H1 (cell line): ENCODE measurements at regions of chr11 and their contacts with region 1.

Region 1: GRCh38 chr11:3091791-3092602 is 34.8 kb upstream of the CARS1 start:
- DNase-seq: peak; percentile 94 to 98
- H3K4me3 ChIP-seq: no peak overlapping the region
- H3K27ac ChIP-seq: no peak overlapping the region
- H3K4me1 ChIP-seq: peaks cover 0 to 20% (median 6%) of the 10 kb centered on the region in 4 experiments; a peak in 5 of 7 replicates
- H3K27me3 ChIP-seq: no peaks in the 10 kb centered on the region
- CTCF ChIP-seq: peak in 2 of 3 experiments; percentile 99; a peak in 3 of 4 replicates
- EP300 ChIP-seq: peak in 1 of 2 experiments; percentile 74; a peak in 1 of 3 replicates
- POLR2A ChIP-seq: no peak
- RAD21 ChIP-seq: peak; percentile 96 to 97

Region 2: GRCh38 chr11:2955906-2956476 is 136.0 kb before region 1 on chr11:
- CTCF ChIA-PET with region 1: interaction called, 11 read pairs
- POLR2A ChIA-PET with region 1: no interaction called
- DNase-seq: no peak
- H3K4me3 ChIP-seq: no peak overlapping the region
- H3K27ac ChIP-seq: no peak overlapping the region; the same call in 1 of the 2 replicates
- H3K4me1 ChIP-seq: peaks cover 0 to 3% (median 1%) of the 10 kb centered on the region in 4 experiments; a peak in 3 of 7 replicates
- H3K27me3 ChIP-seq: no peaks in the 10 kb centered on the region
- CTCF ChIP-seq: peak; percentile 7 to 33 (median 29)
- EP300 ChIP-seq: no peak
- POLR2A ChIP-seq: no peak
- RAD21 ChIP-seq: peak in 1 of 2 experiments; percentile 27; a peak in 1 of 4 replicates

Region 3: DNA sequence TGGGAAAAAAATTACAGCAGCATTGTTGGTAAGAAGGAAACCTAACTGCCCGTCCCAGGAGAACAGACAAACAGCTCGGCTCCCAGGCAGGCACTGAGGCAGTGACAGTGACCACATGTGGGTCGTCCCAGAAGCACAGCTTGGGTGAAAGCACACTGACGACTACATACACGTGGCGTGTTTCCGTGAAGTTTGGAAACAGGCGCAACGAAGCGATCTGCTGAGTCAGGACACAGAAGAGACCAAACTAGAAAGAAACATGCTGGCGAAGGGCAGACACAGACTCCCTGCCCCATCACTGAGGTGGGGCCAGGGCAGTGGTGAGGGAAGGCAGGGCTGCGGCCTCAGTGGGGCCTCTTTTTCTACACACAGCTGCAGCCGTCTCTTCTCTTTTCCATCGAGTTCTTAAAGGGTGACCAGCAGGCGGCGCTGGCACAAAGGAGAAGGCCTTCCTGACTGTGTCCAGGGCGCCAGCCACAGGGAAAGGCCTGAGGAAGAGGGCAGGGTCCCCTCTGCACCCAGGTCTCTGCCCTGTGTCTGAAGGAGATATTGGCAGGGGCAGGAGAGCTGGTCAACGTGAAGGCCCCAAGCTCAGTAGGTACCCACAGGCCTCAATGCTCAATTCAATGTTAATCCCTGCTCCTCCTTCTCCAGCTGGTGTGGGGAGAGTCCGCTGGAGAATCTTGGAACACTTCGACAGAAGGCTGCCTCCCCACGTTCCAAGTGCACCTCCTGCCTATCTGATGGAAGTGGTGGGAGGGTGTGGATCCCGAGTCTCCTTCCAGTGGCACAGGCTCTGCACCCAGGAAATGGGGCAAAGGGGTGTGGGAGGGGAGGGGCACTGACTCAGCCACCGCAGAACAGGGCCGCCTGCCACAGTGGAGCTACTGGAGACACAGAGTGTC is 54.7 kb before region 1 on chr11:
- CTCF ChIA-PET with region 1: interaction called, 434 read pairs
- POLR2A ChIA-PET with region 1: interaction called, 13 read pairs
- DNase-seq: peak; percentile 43 to 90
- H3K4me3 ChIP-seq: no peak overlapping the region
- H3K27ac ChIP-seq: no peak overlapping the region
- H3K4me1 ChIP-seq: no peaks in the 10 kb centered on the region
- H3K27me3 ChIP-seq: no peaks in the 10 kb centered on the region
- CTCF ChIP-seq: peak; percentile 64 to 92 (median 85)
- EP300 ChIP-seq: no peak
- POLR2A ChIP-seq: no peak
- RAD21 ChIP-seq: peak; percentile 87 to 89

Region 4: DNA sequence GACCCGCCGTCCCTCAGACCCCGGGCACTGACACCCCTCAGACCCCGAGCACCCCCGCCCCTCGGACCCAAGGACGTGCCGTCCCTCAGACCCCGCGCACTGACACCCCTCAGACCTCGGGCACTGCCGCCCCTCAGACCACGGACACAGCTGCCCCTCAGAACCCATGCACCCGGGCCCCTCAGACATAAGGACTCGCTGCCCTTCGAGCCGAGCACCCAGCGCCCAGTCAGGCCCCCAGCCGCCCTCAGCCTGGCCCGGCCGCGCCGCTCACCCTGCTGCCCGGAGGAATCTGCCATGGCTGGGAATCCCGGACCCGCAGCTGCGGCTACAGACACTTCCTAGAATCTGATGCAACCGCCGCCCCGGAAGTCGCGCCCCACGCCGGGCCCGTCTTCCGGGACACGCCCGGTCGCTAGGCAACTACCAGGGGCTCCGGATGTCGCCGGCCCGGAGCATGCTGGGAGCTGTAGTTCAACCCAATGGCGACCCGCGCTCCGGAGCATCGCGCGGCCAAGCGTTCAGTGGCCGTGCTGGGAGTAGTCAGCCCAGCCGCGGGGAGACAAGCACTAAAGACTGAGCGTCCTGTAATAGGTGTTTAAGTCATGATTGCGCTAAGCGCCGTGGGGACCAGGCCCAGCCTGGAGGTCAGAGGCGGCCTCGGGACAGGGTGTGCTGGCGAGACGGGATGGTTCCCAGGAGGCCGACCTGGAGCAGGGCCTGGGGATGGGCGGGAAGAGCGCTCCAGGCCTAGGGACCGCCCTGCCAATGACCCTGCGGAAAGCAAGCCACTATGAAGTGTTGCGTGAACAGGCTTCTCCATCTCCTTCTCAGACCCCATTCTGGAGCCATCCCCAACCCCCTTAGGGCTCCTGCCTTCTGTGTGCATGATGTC is 34.7 kb before region 1 on chr11 and contains the start of gene CARS1:
- CTCF ChIA-PET with region 1: interaction called, 434 read pairs
- POLR2A ChIA-PET with region 1: interaction called, 7 read pairs
- DNase-seq: peak; percentile 59 to 91
- H3K4me3 ChIP-seq: peak within 1 kb of the TSS; percentile 80 to 96 (median 87)
- H3K27ac ChIP-seq: peak within 1 kb of the TSS; percentile 62
- H3K4me1 ChIP-seq: peaks cover 0 to 12% (median 5%) of the 10 kb centered on the region in 4 experiments; a peak in 5 of 7 replicates
- H3K27me3 ChIP-seq: no peaks in the 10 kb centered on the region
- CTCF ChIP-seq: no peak
- EP300 ChIP-seq: no peak
- POLR2A ChIP-seq: peak; percentile 41 to 53; a peak in 2 of 3 replicates
- RAD21 ChIP-seq: no peak
- total RNA-seq, gene CARS1: 89.4 and 100 TPM in 2 replicates

Region 5: GRCh38 chr11:3109921-3110706 is 18.1 kb after region 1 on chr11:
- CTCF ChIA-PET with region 1: interaction called, 18 read pairs
- POLR2A ChIA-PET with region 1: no interaction called
- DNase-seq: peak; percentile 43 to 86
- H3K4me3 ChIP-seq: no peak overlapping the region
- H3K27ac ChIP-seq: no peak overlapping the region
- H3K4me1 ChIP-seq: peaks cover 0 to 16% (median 8%) of the 10 kb centered on the region in 4 experiments; a peak in 5 of 7 replicates
- H3K27me3 ChIP-seq: no peaks in the 10 kb centered on the region; a peak in 2 of 7 replicates
- CTCF ChIP-seq: peak; percentile 90 to 96 (median 93)
- EP300 ChIP-seq: no peak
- POLR2A ChIP-seq: no peak
- RAD21 ChIP-seq: peak; percentile 77 to 86

Region 6: GRCh38 chr11:3177931-3178330 is 85.9 kb after region 1 on chr11:
- CTCF ChIA-PET with region 1: no interaction called
- POLR2A ChIA-PET with region 1: no interaction called
- DNase-seq: no peak
- H3K4me3 ChIP-seq: no peak overlapping the region
- H3K27ac ChIP-seq: no peak overlapping the region
- H3K4me1 ChIP-seq: no peaks in the 10 kb centered on the region
- H3K27me3 ChIP-seq: no peaks in the 10 kb centered on the region
- CTCF ChIP-seq: no peak
- EP300 ChIP-seq: no peak
- POLR2A ChIP-seq: no peak
- RAD21 ChIP-seq: no peak

Region 7: GRCh38 chr11:3217676-3218482 is 125.9 kb after region 1 on chr11:
- CTCF ChIA-PET with region 1: interaction called, 19 read pairs
- POLR2A ChIA-PET with region 1: no interaction called
- DNase-seq: peak in 1 of 2 experiments; percentile 49
- H3K4me3 ChIP-seq: no peak overlapping the region
- H3K27ac ChIP-seq: no peak overlapping the region
- H3K4me1 ChIP-seq: peaks cover 0 to 12% (median 4%) of the 10 kb centered on the region in 4 experiments; a peak in 3 of 7 replicates
- H3K27me3 ChIP-seq: no peaks in the 10 kb centered on the region
- CTCF ChIP-seq: no peak
- EP300 ChIP-seq: no peak
- POLR2A ChIP-seq: no peak
- RAD21 ChIP-seq: no peak